Ascending aorta (tissue), 2 donors: ENCODE measurements at regions of chr3 and their contacts with region 1.

Region 1: DNA sequence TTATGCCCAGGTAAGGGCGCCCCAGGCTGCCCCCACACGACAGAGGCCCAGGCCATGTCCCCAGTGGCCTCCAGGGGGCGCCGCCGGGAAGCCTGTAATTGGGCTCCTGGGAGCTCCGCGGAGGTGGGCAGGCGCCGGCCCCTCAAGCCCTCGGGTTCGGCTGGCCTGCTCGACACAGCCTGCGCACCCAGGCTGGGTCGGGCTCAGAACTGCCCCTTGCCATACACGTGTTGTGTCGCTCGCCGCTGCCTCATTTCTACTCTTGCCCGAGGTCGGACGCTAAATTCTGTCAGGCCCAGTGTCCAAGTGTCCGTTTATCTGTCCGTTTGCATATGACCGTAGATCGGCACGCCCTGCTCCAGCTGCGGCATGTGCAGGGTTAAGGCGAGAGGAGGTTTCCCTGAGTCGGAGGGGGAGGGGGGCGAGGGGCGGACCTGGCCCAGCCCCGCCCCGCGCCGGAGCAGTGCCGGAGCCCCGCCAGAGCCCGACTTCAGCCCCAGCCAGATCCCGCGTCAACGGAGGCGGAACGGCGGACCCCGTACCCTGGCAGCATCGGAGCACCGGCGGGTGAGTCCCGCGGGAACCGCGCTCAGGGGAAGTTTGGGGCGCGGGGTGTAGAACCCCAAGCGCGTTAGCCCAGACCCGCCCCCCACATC is at the start of gene KLHDC8B:
- DNase-seq: peak; percentile 55 to 91
- H3K4me3 ChIP-seq: peak within 1 kb of the TSS; percentile 70 to 75
- H3K27ac ChIP-seq: peak within 1 kb of the TSS; percentile 82 to 92
- H3K4me1 ChIP-seq: peaks cover 18 to 37% of the 10 kb centered on the region in 2 donors
- H3K27me3 ChIP-seq: no peaks in the 10 kb centered on the region
- CTCF ChIP-seq: peak; percentile 93 to 98 (median 96)
- total RNA-seq, gene KLHDC8B: 57.5 TPM

Region 2: GRCh38 chr3:49119439-49119838 is 51.8 kb before region 1 on chr3:
- intact Hi-C with region 1: no loop called
- DNase-seq: no peak
- H3K4me3 ChIP-seq: peak overlapping the region; percentile 92
- H3K27ac ChIP-seq: peak overlapping the region; percentile 92 to 96
- H3K4me1 ChIP-seq: peaks cover 15 to 19% of the 10 kb centered on the region in 2 donors
- H3K27me3 ChIP-seq: no peaks in the 10 kb centered on the region
- CTCF ChIP-seq: no peak

Region 3: DNA sequence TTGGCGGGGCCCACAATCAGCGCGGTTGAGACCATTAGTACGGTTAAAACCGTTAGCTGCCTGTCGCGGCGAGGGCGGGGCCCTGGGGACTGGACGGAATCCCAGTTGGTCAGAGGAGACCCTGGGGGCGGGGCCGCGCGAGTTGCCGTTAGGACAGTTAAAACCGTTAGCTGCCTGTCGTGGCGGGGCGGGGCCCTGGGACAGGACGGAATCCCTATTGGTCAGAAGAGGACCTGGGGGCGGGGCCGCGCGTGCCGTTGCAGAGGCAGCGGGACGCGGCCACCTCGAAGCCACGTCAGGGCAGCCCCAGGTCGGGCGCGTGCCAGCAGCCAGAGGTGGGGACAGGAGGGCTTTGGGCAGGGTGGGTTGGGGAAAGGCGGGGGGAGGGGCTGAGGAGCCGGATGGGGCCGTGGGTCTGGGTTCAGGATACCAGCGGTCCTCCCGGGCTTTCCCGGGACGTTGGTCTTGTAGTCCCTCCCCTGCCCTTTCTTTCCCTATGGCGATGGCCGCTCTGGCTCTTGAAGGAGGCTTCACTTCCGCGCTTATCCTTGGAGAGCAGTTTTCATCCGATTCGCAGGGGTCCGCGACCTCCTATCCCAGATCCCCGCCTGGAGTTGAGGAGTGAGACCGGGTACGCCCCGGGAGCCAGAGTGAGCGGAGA is 28.1 kb after region 1 on chr3:
- intact Hi-C with region 1: loop called (anchors 2 kb)
- DNase-seq: peak; percentile 79 to 95
- H3K4me3 ChIP-seq: peak overlapping the region; percentile 46 to 72
- H3K27ac ChIP-seq: peak overlapping the region; percentile 37 to 77
- H3K4me1 ChIP-seq: peaks cover 0 to 6% of the 10 kb centered on the region in 2 donors
- H3K27me3 ChIP-seq: no peaks in the 10 kb centered on the region
- CTCF ChIP-seq: no peak

Region 4: DNA sequence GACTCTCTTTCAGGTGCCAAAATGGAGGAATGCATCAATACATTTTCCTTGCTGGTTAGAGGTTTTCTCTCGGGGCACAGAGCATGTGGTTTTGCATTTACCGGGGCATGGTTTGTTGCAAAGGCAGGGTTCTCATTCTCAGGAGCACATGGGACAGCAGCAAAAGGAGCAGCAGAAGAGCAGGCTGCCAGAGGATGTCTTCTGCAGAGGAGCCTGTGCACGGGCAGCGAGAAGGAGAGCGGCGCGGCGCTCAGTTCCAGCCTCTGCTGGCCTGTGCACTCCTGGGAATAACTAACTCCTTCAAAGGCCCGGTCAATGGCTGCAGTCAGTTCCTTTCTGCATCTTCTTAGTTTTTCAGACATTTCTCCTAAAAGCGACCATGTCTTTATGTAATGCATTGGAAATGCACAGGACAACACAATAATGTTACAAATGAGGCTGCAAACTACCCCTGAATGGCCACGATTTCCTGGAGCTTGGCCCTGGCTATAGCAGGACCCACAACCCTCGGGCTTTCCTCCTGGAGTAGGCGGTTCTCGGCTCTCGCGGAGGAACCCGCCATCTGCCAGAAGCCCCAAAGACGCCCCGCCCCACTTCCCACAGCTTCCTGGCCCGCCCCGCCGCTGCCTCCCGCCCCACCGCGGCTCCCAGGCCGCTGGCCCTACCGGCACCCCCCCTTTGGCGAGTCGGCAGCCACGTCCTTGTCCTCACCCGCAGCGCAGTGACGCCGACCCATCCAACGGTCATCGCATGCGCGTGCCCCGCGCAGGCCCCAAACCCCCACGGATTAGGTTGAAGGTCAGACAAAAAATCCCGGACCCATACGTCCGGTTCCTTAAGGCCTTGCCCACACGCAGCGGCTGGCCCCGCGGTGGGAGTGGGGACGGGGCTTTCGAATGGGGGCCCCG is 105.5 kb after region 1 on chr3 and contains the start of gene C3orf62:
- intact Hi-C with region 1: loop called (anchors 1 kb)
- DNase-seq: peak; percentile 56 to 95
- H3K4me3 ChIP-seq: peak within 1 kb of the TSS; percentile 50 to 64
- H3K27ac ChIP-seq: peak within 1 kb of the TSS; percentile 93 to 96
- H3K4me1 ChIP-seq: peaks cover 6 to 10% of the 10 kb centered on the region in 2 donors
- H3K27me3 ChIP-seq: no peaks in the 10 kb centered on the region
- CTCF ChIP-seq: no peak
- total RNA-seq, gene C3orf62: 0.43 TPM

Region 5: DNA sequence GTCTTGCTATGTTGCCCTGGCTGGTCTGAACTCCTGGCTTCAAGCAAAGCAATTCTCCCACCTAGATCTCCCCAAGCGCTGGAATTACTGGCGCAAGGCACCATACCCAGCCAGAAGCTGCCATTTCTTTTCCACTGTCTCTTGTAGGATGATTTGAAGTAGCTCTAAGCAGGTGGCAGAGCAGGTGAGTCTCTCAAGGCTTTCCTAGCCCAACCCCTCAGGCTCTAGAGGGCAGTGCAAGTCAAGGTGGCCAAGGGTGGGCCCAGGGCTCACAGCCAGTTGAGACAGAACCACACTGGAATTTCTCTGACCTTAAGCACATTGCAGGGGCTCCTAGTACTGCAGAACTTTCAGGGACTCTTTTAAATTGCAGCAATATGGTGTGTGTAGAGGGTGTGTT is 283.2 kb after region 1 on chr3:
- intact Hi-C with region 1: loop called (anchors 1 kb)
- DNase-seq: no peak
- H3K4me3 ChIP-seq: no peak overlapping the region
- H3K27ac ChIP-seq: peak overlapping the region; percentile 12 to 54
- H3K4me1 ChIP-seq: peaks cover 0 to 3% of the 10 kb centered on the region in 2 donors
- H3K27me3 ChIP-seq: no peaks in the 10 kb centered on the region
- CTCF ChIP-seq: peak in 1 of 3 experiments; percentile 39